ENCODE measurements at regions of chr15 and their contacts with region 1.

Region 1: DNA sequence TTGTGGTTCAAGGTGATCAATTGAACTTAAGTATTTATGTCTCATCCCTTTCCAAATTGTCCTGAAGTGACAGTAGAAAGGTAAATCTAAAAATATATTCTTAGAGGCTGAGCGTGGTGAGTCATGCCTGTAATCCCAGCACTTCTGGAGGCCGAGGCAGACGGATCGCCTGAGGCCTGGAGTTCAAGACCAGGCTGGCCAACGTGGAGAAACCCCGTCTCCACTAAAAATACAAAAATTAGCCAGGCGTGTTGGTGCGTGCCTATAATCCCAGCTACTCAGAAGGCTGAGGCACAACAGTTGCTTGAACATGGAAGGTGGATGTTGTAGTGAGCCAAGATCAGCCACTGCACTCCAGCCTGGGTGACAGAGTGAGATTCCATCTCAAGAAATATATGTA is 226.6 kb downstream of the DPH6 start:
- DNase-seq: no peak
- ATAC-seq: no peak
- H3K4me3 ChIP-seq: no peak overlapping the region
- H3K27ac ChIP-seq: no peak overlapping the region
- H3K4me1 ChIP-seq: no peaks in the 10 kb centered on the region
- H3K27me3 ChIP-seq: no peaks in the 10 kb centered on the region

Region 2: DNA sequence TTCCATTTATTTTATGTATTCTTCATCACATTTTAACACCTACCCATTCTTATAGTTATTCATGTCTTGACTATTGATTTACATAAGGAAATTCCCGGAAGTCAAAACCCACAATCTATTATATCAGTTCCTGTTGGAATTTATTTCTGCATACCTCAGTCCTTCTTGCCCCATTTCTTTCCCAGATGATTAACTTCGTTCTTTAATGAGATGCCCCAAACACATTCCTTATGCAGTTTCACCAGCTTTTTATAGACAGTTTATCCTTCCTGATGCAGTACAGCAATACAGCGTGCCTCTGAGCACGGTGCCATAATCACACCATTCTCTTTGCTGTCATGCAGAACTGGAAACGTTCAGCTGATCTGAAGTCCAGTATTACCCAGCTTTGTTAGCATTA is 58.4 kb before region 1 on chr15:
- intact Hi-C with region 1: no loop called
- DNase-seq: no peak
- ATAC-seq: no peak
- H3K4me3 ChIP-seq: no peak overlapping the region
- H3K27ac ChIP-seq: no peak overlapping the region
- H3K4me1 ChIP-seq: no peaks in the 10 kb centered on the region
- H3K27me3 ChIP-seq: no peaks in the 10 kb centered on the region

Region 3: GRCh38 chr15:35410774-35411173 is 91.4 kb after region 1 on chr15:
- intact Hi-C with region 1: loop called in 1 of 4 experiments (anchors 5 kb)
- DNase-seq: no peak
- ATAC-seq: no peak
- H3K4me3 ChIP-seq: no peak overlapping the region
- H3K27ac ChIP-seq: no peak overlapping the region
- H3K4me1 ChIP-seq: no peaks in the 10 kb centered on the region
- H3K27me3 ChIP-seq: no peaks in the 10 kb centered on the region